Left ventricle myocardium inferior (tissue), 1 donor: ENCODE measurements at regions of chr10 and their contacts with region 1.

Region 1: DNA sequence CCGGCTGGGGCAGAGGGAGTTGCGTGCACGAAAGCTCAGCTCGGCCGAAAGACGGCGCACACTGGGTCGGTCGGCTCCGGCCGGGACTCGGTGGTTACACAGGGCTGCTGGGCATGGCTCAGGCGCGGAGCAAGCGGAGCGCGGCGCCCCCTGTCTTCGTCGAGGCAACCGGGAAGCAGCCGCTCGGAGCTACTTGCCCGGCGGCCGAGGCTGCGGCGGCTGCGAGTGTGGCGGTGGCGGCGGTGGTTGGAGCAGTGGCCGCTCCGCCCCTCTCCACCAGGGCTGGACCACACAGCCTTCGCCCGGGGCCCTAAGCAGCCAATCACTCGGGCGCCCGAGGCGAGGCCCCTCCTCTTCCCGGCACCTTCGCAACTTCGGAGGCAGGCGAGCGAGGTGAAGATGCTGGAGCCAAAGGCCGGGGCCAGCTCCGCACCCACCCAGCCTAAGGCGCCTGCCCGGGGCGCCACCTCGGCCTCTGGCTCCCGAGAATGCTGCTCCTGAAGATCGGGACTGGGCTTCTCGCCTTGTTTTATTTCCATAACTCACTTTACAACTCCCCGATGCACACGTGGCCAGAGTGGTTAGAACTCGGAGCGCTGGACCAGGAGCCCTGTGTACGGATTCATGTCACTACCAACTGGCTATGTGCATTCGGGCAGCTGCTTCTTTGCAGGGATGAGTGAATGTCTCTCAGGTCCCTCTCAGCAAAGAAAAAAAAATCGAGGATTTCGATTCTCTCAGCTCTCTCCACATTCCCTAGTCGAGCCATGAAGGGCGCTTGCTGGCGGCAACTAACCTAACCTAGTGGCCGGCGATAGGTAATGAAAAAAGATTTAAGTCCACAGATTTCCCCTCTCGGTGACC is at the start of gene TLL2:
- DNase-seq: peak; percentile 92
- H3K4me3 ChIP-seq: peak within 1 kb of the TSS; percentile 80
- H3K27ac ChIP-seq: peak within 1 kb of the TSS; percentile 85
- H3K4me1 ChIP-seq: peaks cover 29% of the 10 kb centered on the region
- H3K27me3 ChIP-seq: no peaks in the 10 kb centered on the region
- CTCF ChIP-seq: peak; percentile 88
- total RNA-seq, gene TLL2: 7.0 TPM

Region 2: GRCh38 chr10:96395931-96396877 is 117.7 kb before region 1 on chr10:
- intact Hi-C with region 1: loop called (anchors 5 kb)
- DNase-seq: peak; percentile 61
- H3K4me3 ChIP-seq: no peak overlapping the region
- H3K27ac ChIP-seq: peak overlapping the region; percentile 8
- H3K4me1 ChIP-seq: peaks cover 54% of the 10 kb centered on the region
- H3K27me3 ChIP-seq: peaks cover 16% of the 10 kb centered on the region
- CTCF ChIP-seq: peak; percentile 91